ENCODE measurements at regions of chr20 and their contacts with region 1.

Region 1: GRCh38 chr20:25399037-25399430 is 8.4 kb upstream of the ABHD12 start:
- DNase-seq: peak; percentile 38 to 59 (median 53)
- H3K4me3 ChIP-seq: no peak overlapping the region
- H3K4me3 Mint-ChIP-seq: no peak overlapping the region
- H3K27ac ChIP-seq: no peak overlapping the region
- H3K27ac Mint-ChIP-seq: no peak overlapping the region
- H3K4me1 ChIP-seq: peaks cover 2 to 8% of the 10 kb centered on the region in 2 donors
- H3K4me1 Mint-ChIP-seq: peaks cover 9% of the 10 kb centered on the region
- H3K27me3 ChIP-seq: no peaks in the 10 kb centered on the region
- H3K27me3 Mint-ChIP-seq: peaks cover 3 to 4% (median 4%) of the 10 kb centered on the region in 3 donors
- CTCF ChIP-seq: peak; percentile 74

Region 2: DNA sequence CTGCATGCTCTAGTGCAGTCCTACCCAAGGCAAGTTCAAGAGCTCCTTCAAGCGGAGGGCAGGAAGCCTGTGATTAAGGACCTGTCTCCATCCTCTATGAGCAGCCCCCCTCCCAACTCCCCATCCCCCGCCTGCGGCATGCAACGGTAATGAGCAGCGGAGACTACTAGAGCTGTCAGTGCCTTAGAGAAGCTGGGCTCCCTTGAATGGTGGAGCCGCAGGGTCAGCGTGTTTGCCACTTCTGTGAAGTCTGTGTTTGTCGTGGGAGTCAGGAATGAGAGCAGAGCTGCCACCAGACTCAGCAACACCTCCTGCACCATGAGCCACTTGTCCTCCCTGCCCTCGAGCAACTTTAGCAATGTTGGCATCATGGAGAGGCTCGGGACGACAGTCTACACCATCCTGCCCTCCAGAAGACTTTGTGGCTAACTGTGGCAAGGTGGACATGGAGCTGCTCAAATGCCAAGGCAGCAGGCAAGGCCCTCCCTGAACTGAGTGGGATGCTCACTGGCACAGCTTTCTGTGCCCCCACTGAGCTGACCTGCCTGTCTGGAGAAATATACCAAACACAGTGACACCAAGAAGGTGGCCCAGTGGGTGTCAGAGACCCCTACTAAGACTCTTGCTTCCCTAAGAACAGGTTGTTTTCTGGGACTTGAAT is 953.4 kb before region 1 on chr20:
- intact Hi-C with region 1: no loop called
- DNase-seq: no peak
- H3K4me3 ChIP-seq: no peak overlapping the region
- H3K4me3 Mint-ChIP-seq: no peak overlapping the region
- H3K27ac ChIP-seq: no peak overlapping the region
- H3K27ac Mint-ChIP-seq: no peak overlapping the region
- H3K4me1 ChIP-seq: no peaks in the 10 kb centered on the region
- H3K4me1 Mint-ChIP-seq: no peaks in the 10 kb centered on the region
- H3K27me3 ChIP-seq: no peaks in the 10 kb centered on the region
- H3K27me3 Mint-ChIP-seq: peaks cover 0 to 5% (median 1%) of the 10 kb centered on the region in 3 donors
- CTCF ChIP-seq: no peak

Region 3: DNA sequence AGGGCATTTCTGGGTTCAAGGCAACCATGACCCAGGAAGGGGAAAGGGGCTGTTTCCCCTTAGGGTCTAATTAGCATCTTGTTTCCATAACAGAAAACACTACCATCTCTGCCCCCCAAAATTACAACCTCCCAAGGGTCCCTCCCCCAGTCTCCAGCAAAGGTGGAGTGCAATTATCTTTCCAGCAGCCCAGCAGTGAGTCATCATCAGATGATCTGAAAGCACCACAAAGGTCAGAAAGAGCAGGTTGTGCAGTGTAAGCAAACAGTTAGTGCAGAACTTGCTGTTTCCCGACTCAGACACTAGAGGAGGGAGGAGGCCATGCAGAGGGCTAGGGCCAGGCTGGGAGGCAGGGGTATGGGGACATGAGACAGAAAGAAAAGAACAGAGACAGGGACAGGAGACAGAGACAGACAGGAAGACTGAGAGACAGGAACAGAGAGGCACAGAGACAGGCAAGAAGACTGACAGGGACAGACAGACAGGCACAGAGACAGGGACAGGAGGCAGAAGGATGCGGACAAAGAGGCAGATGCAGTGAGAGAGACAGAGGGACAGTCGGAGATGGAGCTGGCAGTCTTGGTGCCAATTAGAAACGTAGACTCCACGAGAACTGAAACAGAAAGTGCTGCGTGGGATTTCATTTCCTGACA is 88.6 kb before region 1 on chr20:
- intact Hi-C with region 1: loop called (anchors 5 to 10 kb)
- DNase-seq: peak; percentile 84 to 92 (median 85)
- H3K4me3 ChIP-seq: peak overlapping the region; percentile 14 to 64 (median 31)
- H3K4me3 Mint-ChIP-seq: peak overlapping the region; percentile 81 to 96
- H3K27ac ChIP-seq: peak overlapping the region; percentile 82 to 92
- H3K27ac Mint-ChIP-seq: peak overlapping the region; percentile 92 to 100 (median 96)
- H3K4me1 ChIP-seq: peaks cover 25 to 28% of the 10 kb centered on the region in 2 donors
- H3K4me1 Mint-ChIP-seq: peaks cover 29% of the 10 kb centered on the region
- H3K27me3 ChIP-seq: no peaks in the 10 kb centered on the region
- H3K27me3 Mint-ChIP-seq: peaks cover 0 to 2% (median 0%) of the 10 kb centered on the region in 3 donors
- CTCF ChIP-seq: peak; percentile 43